ENCODE measurements at regions of chr2 and their contacts with region 1.

Region 1: DNA sequence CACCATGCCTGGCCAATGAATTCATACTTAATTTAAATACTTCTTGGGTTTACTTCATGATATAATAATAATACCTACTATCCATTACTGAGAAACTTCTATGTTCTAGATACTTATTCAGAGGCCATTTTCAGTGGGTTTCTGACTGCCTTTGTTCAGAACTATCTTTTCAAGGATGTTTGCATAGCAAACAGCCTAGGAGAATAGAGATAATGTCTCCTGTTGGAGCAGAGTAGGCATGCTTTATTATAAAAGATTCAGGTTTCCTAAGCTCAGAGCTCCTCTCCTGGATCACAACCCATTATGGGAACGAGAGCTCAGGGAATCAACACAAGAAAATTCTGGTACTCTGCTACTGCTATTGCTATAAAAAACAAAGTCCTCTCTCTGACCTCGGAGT is 11.1 kb downstream of the FASTKD1 start:
- DNase-seq: no peak
- H3K4me3 ChIP-seq: no peak overlapping the region
- H3K27ac ChIP-seq: no peak overlapping the region
- H3K4me1 ChIP-seq: no peaks in the 10 kb centered on the region
- H3K27me3 ChIP-seq: no peaks in the 10 kb centered on the region
- CTCF ChIP-seq: no peak

Region 2: DNA sequence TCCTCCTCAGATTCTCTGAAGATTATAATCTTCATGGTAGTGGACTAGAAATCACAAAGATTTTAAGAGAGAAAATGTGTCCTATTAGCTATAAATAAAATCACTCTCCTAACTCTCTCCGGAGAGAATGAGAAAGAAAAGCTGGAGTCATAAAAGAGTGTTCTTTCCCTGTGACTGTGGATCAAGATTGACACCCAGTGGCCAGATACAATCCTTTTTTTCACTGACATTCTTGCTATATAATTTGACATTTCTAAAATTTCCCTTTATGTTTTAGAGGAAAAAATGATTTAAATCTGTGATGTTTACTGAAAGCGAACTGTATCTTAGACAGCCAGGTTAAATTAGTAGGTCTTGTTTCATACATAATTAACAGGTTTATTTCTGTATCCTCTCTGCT is 164.8 kb before region 1 on chr2:
- intact Hi-C with region 1: no loop called
- DNase-seq: no peak
- H3K4me3 ChIP-seq: no peak overlapping the region
- H3K27ac ChIP-seq: no peak overlapping the region
- H3K4me1 ChIP-seq: no peaks in the 10 kb centered on the region
- H3K27me3 ChIP-seq: peaks cover 2% of the 10 kb centered on the region
- CTCF ChIP-seq: no peak

Region 3: GRCh38 chr2:169415233-169415748 is 147.2 kb before region 1 on chr2:
- intact Hi-C with region 1: no loop called
- DNase-seq: no peak
- H3K4me3 ChIP-seq: no peak overlapping the region
- H3K27ac ChIP-seq: no peak overlapping the region
- H3K4me1 ChIP-seq: no peaks in the 10 kb centered on the region
- H3K27me3 ChIP-seq: no peaks in the 10 kb centered on the region
- CTCF ChIP-seq: no peak

Region 4: GRCh38 chr2:169462896-169463695 is 99.4 kb before region 1 on chr2:
- intact Hi-C with region 1: loop called (anchors 10 kb)
- DNase-seq: no peak
- H3K4me3 ChIP-seq: no peak overlapping the region
- H3K27ac ChIP-seq: no peak overlapping the region
- H3K4me1 ChIP-seq: no peaks in the 10 kb centered on the region
- H3K27me3 ChIP-seq: no peaks in the 10 kb centered on the region
- CTCF ChIP-seq: no peak

Region 5: GRCh38 chr2:169676357-169676756 is 113.8 kb after region 1 on chr2:
- intact Hi-C with region 1: no loop called
- DNase-seq: no peak
- H3K4me3 ChIP-seq: no peak overlapping the region
- H3K27ac ChIP-seq: no peak overlapping the region
- H3K4me1 ChIP-seq: no peaks in the 10 kb centered on the region
- H3K27me3 ChIP-seq: no peaks in the 10 kb centered on the region
- CTCF ChIP-seq: no peak

Region 6: DNA sequence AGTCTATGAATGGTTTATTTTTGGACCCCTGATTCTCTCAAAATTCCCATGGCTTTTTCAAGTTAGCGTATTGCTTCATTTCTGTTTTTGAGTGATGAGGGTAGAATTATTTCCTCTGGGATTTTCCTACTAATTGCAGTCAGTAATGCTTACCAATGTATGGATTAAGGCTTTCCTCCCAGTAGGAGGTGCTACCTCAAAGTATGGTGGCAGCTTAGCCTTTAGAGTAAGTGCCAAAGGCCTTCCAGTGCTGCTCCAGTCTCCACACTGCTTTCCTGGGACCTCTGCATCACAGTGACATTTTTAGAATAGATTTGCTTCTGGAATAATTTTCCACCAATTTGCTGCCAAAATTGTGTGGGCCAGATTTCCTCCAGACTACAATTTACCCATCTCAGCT is 220.0 kb after region 1 on chr2:
- intact Hi-C with region 1: no loop called
- DNase-seq: no peak
- H3K4me3 ChIP-seq: no peak overlapping the region
- H3K27ac ChIP-seq: no peak overlapping the region
- H3K4me1 ChIP-seq: no peaks in the 10 kb centered on the region
- H3K27me3 ChIP-seq: no peaks in the 10 kb centered on the region
- CTCF ChIP-seq: no peak